ENCODE measurements at regions of chr17 and their contacts with region 1.

Region 1: GRCh38 chr17:1829592-1830257 is at the starts of genes RPA1 and SMYD4:
- DNase-seq: peak; percentile 75
- ATAC-seq: peak; percentile 100
- H3K4me3 ChIP-seq: peak within 1 kb of the TSS; percentile 66 to 88 (median 84)
- H3K27ac ChIP-seq: peak within 1 kb of the TSS; percentile 73
- H3K4me1 ChIP-seq: peaks cover 29% of the 10 kb centered on the region
- H3K27me3 ChIP-seq: no peaks in the 10 kb centered on the region; a peak in 1 of 5 replicates
- CTCF ChIP-seq: peak; percentile 7; the same call in 1 of the 2 replicates
- EP300 ChIP-seq: no peak; a peak in 1 of 4 replicates
- POLR2A ChIP-seq: peak; percentile 74 to 93
- RAD21 ChIP-seq: peak; percentile 20; the same call in 1 of the 2 replicates
- total RNA-seq, gene RPA1: 13.9 and 53.3 TPM in 2 replicates
- total RNA-seq, gene SMYD4: 9.8 and 11.3 TPM in 2 replicates

Region 2: DNA sequence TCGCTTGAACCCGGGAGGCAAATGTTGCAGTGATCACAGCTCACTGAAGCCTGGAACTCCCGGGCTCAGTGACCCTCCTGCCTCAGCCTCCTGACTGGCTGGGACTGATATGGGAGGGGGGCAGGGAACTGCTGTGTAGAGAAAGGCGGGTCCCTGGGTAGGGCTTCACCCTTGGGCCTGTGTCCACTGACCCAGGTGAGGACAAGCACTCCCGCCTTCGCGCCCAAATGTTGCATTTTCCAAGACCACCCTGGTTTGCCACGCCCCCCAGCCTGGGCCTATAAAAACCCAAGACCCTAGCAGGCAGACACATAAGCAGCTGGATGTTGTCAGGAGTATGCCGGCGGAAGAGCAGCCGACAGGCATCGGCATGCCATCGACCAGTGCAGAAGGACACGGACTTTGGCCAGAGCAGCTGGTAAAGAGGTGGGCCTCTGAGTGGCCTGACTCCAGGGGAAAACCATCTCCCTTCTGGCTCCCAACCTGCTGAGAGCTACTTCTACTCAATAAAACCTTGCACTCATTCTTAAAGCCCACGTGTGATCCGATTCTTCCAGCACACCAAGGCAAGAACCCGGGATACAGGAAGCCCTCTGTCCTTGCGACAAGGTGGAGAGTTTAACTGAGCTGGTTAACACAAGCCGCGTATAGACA is 19.1 kb before region 1 on chr17:
- CTCF ChIA-PET with region 1: no interaction called
- POLR2A ChIA-PET with region 1: interaction called, 38 read pairs
- in situ Hi-C with region 1: no loop called
- intact Hi-C with region 1: no loop called
- DNase-seq: peak; percentile 87
- ATAC-seq: peak; percentile 100
- H3K4me3 ChIP-seq: peak overlapping the region in 2 of 3 experiments; percentile 0 to 57; a peak in 4 of 6 replicates
- H3K27ac ChIP-seq: peak overlapping the region; percentile 87
- H3K4me1 ChIP-seq: peaks cover 41% of the 10 kb centered on the region
- H3K27me3 ChIP-seq: no peaks in the 10 kb centered on the region
- CTCF ChIP-seq: 0 out of 2 replicates have a peak, but pooled peaks have one; percentile 6
- EP300 ChIP-seq: peak; percentile 25 to 66; a peak in 3 of 4 replicates
- POLR2A ChIP-seq: peak; percentile 80 to 89
- RAD21 ChIP-seq: peak; percentile 19

Region 3: DNA sequence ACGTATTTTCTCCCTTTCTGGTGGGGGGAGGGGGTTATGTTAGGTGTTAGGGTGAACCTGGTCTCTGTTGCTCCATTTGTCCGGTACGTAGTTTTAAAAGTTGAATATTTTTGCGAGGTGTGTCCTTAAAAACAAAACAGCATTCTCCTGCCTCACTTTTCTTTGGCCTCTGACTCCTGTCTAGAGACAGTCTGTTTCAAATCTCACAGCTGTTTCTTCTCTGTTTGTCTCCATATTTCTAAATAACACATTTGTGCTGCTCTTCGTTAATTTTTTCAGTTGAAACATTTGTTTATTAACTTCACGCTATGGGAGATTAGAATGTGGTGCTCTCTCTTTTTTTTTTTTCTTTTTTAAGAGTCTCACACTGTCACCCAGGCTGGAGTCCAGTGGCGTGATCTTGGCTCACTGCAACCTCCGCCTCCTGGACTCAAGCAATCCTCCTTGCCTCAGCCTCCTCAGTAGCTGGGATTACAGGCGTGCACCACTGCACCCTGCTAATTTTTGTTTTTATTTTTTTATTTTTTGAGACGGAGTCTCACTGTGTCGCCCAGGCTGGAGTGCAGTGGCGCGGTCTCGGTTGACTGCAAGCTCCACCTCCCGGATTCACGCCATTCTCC is 31.8 kb after region 1 on chr17:
- CTCF ChIA-PET with region 1: no interaction called
- POLR2A ChIA-PET with region 1: no interaction called
- in situ Hi-C with region 1: no loop called
- intact Hi-C with region 1: no loop called
- DNase-seq: no peak
- ATAC-seq: no peak
- H3K4me3 ChIP-seq: no peak overlapping the region
- H3K27ac ChIP-seq: no peak overlapping the region
- H3K4me1 ChIP-seq: no peaks in the 10 kb centered on the region
- H3K27me3 ChIP-seq: no peaks in the 10 kb centered on the region
- CTCF ChIP-seq: no peak
- EP300 ChIP-seq: no peak
- POLR2A ChIP-seq: no peak
- RAD21 ChIP-seq: no peak

Region 4: DNA sequence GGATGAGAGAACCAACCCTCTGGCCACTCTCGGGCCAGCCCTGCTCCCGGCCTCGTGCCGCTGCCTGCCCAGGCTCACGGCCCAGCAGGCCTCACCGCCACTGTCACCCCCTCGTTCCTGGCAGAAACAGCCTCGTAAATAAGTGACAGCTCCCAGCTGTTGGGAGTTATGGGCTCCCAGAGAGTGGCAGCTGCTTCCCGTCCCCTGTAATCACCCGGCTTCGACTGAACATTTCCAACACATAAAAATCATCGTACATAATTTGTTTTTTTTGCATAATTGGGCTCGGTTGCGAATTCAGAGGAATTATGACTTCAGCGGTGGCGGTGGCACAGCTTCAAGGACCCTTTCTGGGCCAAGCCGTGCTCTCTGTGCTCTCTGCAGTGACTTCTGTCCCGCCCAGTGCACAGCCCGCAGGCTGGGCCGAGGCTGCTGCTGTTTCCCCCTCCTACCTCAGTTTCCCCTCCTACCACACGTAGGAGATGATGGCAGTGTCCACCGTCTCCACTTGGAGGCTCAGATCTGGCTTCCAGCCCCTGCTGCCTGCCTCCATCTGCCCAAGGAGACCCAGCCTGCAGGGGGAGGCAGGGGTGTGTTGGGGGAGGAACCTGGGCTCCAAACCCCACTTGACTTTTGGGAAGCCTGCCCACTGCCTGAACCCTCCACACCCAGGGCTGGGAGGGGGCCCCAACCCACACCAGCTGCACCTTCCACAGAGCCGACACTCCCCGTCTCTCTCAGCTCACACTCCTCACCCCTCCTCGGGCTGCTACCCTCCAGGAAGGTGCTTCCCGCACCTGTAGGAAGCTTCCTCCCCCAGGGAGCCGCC is 110.5 kb after region 1 on chr17:
- CTCF ChIA-PET with region 1: no interaction called
- POLR2A ChIA-PET with region 1: no interaction called
- in situ Hi-C with region 1: no loop called
- intact Hi-C with region 1: no loop called
- DNase-seq: no peak
- ATAC-seq: no peak
- H3K4me3 ChIP-seq: no peak overlapping the region
- H3K27ac ChIP-seq: no peak overlapping the region
- H3K4me1 ChIP-seq: no peaks in the 10 kb centered on the region
- H3K27me3 ChIP-seq: peaks cover 17 to 72% of the 10 kb centered on the region in 2 experiments; a peak in 4 of 5 replicates
- CTCF ChIP-seq: no peak
- EP300 ChIP-seq: no peak
- POLR2A ChIP-seq: no peak
- RAD21 ChIP-seq: no peak

Measured in HepG2 (cell line).